Vagina (tissue), 2 donors: ENCODE measurements at regions of chr11 and their contacts with region 1.

Region 1: GRCh38 chr11:86869966-86870570 is 69.7 kb downstream of the PRSS23 start:
- DNase-seq: no peak
- H3K4me3 ChIP-seq: no peak overlapping the region
- H3K27ac ChIP-seq: peak overlapping the region; percentile 46
- H3K4me1 ChIP-seq: no peaks in the 10 kb centered on the region
- H3K27me3 ChIP-seq: no peaks in the 10 kb centered on the region
- CTCF ChIP-seq: peak; percentile 55 to 74 (median 68)
- POLR2A ChIP-seq: no peak

Region 2: DNA sequence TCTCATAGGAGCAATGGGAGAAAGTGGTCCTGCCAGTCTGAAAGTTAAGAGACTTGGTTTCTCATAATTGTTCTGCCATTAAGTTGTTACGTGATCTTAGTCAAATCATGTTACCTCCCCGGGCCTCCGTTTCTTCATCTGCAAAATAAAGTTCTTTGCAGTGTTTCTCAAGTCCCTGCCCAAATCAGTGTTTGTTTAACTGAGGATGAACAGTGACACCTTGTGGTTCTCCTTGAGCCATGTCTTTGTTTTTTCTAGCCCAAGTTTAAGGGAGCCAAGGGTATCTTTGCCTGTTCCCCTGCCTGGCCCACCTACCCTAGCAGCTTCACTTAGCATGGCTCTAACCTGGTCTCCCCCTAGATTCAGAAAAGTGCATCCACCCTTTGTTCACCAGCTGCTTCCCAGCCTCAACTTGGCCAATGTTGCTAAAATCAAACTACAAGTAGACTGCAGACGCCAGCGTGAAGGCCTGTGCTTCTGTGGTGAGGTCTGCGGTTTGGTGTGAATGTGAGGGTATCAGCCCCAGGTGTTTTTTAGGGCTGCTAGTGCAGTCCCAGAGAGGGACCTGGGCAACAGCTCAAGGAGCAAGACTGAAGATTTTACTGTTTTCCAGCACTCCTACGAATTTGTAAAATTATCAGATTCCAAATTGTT is 49.6 kb after region 1 on chr11:
- intact Hi-C with region 1: loop called (anchors 5 kb)
- DNase-seq: no peak
- H3K4me3 ChIP-seq: no peak overlapping the region
- H3K27ac ChIP-seq: peak overlapping the region; percentile 49
- H3K4me1 ChIP-seq: peaks cover 37% of the 10 kb centered on the region
- H3K27me3 ChIP-seq: no peaks in the 10 kb centered on the region
- CTCF ChIP-seq: peak; percentile 43 to 73 (median 60)
- POLR2A ChIP-seq: no peak